K562 (cell line): ENCODE measurements at regions of chr3 and their contacts with region 1.

Region 1: GRCh38 chr3:39126532-39127071 is 19.1 kb downstream of the TTC21A start:
- DNase-seq: peak; percentile 62 to 78 (median 66)
- ATAC-seq: peak; percentile 92
- H3K4me3 ChIP-seq: no peak overlapping the region
- H3K27ac ChIP-seq: no peak overlapping the region
- H3K4me1 ChIP-seq: no peaks in the 10 kb centered on the region; a peak in 1 of 5 replicates
- H3K27me3 ChIP-seq: no peaks in the 10 kb centered on the region
- CTCF ChIP-seq: peak; percentile 85 to 96 (median 89)
- EP300 ChIP-seq: no peak
- POLR2A ChIP-seq: no peak
- RAD21 ChIP-seq: peak; percentile 91 to 98

Region 2: DNA sequence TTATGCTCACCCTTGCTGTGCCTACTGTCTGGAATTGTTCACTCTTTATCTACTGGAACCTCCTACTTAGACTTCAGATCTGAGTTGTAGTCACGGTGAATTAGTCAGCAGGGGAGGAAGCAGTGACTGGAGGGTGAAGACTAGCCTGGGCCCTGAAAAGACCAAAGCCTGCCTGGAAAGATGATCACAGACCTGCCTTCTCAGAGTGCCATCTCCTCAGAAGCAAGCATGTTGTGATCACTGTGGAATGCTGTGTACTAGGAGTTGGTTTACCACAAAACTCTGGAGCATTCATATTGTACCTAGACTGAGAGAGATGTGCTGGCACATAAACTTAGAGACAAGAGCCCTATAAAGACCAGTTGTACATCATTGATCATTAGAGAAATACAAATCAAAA is 209.9 kb before region 1 on chr3:
- CTCF ChIA-PET with region 1: no interaction called
- POLR2A ChIA-PET with region 1: no interaction called
- in situ Hi-C with region 1: no loop called
- intact Hi-C with region 1: no loop called
- DNase-seq: no peak
- ATAC-seq: no peak
- H3K4me3 ChIP-seq: no peak overlapping the region
- H3K27ac ChIP-seq: no peak overlapping the region
- H3K4me1 ChIP-seq: no peaks in the 10 kb centered on the region
- H3K27me3 ChIP-seq: 0 out of 5 replicates have a peak, but pooled peaks cover 0 to 4% of the 10 kb centered on the region in 2 experiments
- CTCF ChIP-seq: no peak
- EP300 ChIP-seq: no peak
- POLR2A ChIP-seq: no peak
- RAD21 ChIP-seq: no peak

Region 3: GRCh38 chr3:39146984-39147591 is 20.5 kb after region 1 on chr3:
- CTCF ChIA-PET with region 1: no interaction called
- POLR2A ChIA-PET with region 1: interaction called, 21 read pairs
- in situ Hi-C with region 1: no loop called
- intact Hi-C with region 1: loop called (anchors 2 kb)
- DNase-seq: peak in 2 of 4 experiments; percentile 56 to 84
- ATAC-seq: peak; percentile 33
- H3K4me3 ChIP-seq: no peak overlapping the region; the same call in 1 of the 2 replicates
- H3K27ac ChIP-seq: peak overlapping the region; percentile 35
- H3K4me1 ChIP-seq: peaks cover 54 to 56% of the 10 kb centered on the region in 2 experiments
- H3K27me3 ChIP-seq: no peaks in the 10 kb centered on the region; a peak in 1 of 5 replicates
- CTCF ChIP-seq: no peak
- EP300 ChIP-seq: no peak
- POLR2A ChIP-seq: no peak; the same call in 1 of the 2 replicates
- RAD21 ChIP-seq: no peak

Region 4: GRCh38 chr3:39158148-39158715 is 31.6 kb after region 1 on chr3:
- CTCF ChIA-PET with region 1: no interaction called
- POLR2A ChIA-PET with region 1: no interaction called
- in situ Hi-C with region 1: no loop called
- intact Hi-C with region 1: no loop called
- DNase-seq: no peak
- ATAC-seq: no peak
- H3K4me3 ChIP-seq: no peak overlapping the region
- H3K27ac ChIP-seq: no peak overlapping the region
- H3K4me1 ChIP-seq: peaks cover 14 to 19% of the 10 kb centered on the region in 2 experiments
- H3K27me3 ChIP-seq: no peaks in the 10 kb centered on the region; a peak in 1 of 5 replicates
- CTCF ChIP-seq: no peak
- EP300 ChIP-seq: no peak
- POLR2A ChIP-seq: no peak
- RAD21 ChIP-seq: no peak

Region 5: DNA sequence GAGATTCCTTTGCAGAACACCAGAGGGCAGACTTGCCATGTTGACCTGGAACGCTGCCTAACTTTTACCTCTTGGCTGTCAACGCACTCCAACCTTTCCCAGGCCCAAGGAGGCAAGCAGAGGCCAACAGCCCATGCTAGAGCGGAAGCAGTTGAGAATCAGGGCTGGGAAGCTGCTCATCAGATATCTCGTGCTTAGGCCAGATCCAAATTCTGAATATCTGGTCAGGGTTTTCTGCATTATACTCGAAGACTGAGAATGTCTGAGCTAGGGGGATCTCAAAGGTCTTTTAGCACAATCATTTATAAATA is 63.3 kb after region 1 on chr3:
- CTCF ChIA-PET with region 1: interaction called, 10 read pairs
- POLR2A ChIA-PET with region 1: interaction called, 4 read pairs
- in situ Hi-C with region 1: loop called (anchors 5 kb)
- intact Hi-C with region 1: no loop called
- DNase-seq: peak; percentile 79 to 86 (median 80)
- ATAC-seq: peak; percentile 85
- H3K4me3 ChIP-seq: no peak overlapping the region
- H3K27ac ChIP-seq: no peak overlapping the region
- H3K4me1 ChIP-seq: peaks cover 0 to 26% of the 10 kb centered on the region in 2 experiments; a peak in 2 of 5 replicates
- H3K27me3 ChIP-seq: peaks cover 11 to 23% of the 10 kb centered on the region in 2 experiments; a peak in 4 of 5 replicates
- CTCF ChIP-seq: peak; percentile 89 to 94 (median 91)
- EP300 ChIP-seq: peak; percentile 43
- POLR2A ChIP-seq: no peak
- RAD21 ChIP-seq: peak; percentile 99 to 100

Region 6: DNA sequence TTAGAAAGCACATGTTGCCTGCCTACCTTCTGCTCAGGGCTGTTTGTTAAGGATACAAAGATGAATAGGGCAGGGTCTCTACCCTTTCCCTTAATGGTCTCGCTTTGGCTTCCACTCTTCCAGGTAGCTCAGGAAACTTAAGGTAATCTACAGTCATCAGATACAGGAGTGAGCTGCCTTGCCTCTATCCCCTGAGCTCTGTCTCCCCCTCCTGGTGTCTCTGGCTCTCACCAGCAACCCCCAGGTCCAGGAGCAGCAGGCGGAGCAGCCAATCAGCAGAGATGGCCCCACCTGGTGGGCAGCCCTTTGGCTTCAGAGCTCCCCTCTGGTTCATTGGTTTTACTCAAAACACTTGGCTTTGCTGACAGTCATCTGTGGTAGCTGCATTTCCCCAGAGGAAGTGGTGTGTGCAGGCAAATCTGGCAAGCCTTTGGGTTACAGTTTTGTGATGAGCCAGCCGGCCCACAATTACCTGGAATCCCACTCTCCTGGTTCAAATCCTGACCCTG is 161.8 kb after region 1 on chr3:
- CTCF ChIA-PET with region 1: interaction called, 42 read pairs
- POLR2A ChIA-PET with region 1: interaction called, 7 read pairs
- in situ Hi-C with region 1: loop called (anchors 5 kb)
- intact Hi-C with region 1: loop called (anchors 1 kb)
- DNase-seq: peak; percentile 90 to 97 (median 94)
- ATAC-seq: peak; percentile 96
- H3K4me3 ChIP-seq: no peak overlapping the region
- H3K27ac ChIP-seq: no peak overlapping the region
- H3K4me1 ChIP-seq: peaks cover 3 to 21% of the 10 kb centered on the region in 2 experiments; a peak in 3 of 5 replicates
- H3K27me3 ChIP-seq: peaks cover 0 to 4% of the 10 kb centered on the region in 2 experiments; a peak in 1 of 5 replicates
- CTCF ChIP-seq: peak; percentile 99 to 100 (median 99)
- EP300 ChIP-seq: peak; percentile 29; the same call in 1 of the 2 replicates
- POLR2A ChIP-seq: no peak
- RAD21 ChIP-seq: peak; percentile 100

Region 7: DNA sequence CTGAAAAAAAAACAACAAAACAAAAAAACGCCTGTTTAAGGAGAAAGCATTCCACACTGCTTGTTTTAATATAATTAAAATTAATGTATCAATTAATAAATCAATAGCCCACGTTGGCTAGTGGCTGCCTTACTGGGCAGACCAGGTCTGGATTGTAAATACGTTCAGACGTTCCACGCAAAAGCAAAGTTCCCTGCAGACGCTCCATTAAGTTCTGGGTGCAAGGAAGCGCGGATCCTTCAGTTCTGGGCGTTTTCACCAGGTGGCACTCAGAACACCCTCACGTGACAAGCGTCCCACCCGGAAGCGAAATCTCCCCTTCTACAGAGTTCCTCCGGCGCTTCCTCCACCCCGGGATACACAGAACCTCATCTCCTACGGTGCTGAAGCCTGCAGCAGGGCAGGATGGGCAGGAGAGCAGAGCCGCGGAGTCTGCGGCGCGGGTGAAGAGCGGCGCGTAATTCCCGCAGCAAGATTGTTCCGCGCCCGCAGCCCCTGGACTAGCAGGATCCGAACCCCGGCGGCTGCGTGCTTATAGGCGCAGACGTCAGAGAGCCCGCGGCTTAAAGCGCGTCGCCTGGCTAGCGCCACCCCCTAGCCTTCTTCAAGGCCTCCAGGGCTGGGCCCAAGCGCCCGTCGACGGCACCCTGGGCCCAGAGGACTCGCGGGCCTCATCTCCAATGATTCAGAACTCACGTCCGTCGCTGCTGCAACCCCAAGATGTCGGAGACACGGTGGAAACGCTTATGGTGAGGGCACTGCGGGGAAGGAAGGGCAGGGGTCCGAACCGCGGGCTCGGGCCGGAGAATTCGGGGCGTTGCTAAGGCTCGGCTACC is 256.7 kb after region 1 on chr3 and contains the start of gene SLC25A38:
- CTCF ChIA-PET with region 1: interaction called, 3 read pairs
- POLR2A ChIA-PET with region 1: no interaction called
- in situ Hi-C with region 1: loop called (anchors 10 kb)
- intact Hi-C with region 1: loop called (anchors 5 kb)
- DNase-seq: peak; percentile 82 to 94 (median 88)
- ATAC-seq: peak; percentile 88
- H3K4me3 ChIP-seq: peak within 1 kb of the TSS; percentile 69
- H3K27ac ChIP-seq: peak within 1 kb of the TSS; percentile 85
- H3K4me1 ChIP-seq: peaks cover 39 to 50% of the 10 kb centered on the region in 2 experiments
- H3K27me3 ChIP-seq: peaks cover 3 to 4% of the 10 kb centered on the region in 2 experiments; a peak in 3 of 5 replicates
- CTCF ChIP-seq: peak; percentile 61 to 64 (median 61)
- EP300 ChIP-seq: peak; percentile 35; the same call in 1 of the 2 replicates
- POLR2A ChIP-seq: peak; percentile 78
- RAD21 ChIP-seq: peak; percentile 43 to 45; a peak in 2 of 4 replicates
- polyA plus RNA-seq, gene SLC25A38: 13.5 to 16.5 TPM

Region 8: DNA sequence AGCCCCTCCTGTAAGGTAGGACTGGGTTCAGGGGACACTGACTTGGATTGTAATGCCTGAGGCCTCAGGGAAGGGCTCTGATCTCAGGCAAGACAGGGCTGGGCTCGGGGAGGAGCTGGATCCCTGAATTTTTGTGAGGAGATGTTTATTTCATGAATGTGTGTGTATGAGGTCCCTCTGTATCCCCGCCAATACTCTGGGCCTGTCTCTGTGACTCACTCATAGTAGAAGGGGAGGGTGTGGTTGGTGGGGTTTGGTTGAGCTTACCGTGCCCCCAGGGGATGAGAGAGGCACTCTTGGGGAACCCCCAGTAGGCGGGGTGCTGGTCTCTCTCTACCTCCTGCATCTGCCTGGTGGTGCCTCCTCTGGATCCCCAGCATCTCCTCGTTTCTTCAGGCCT is 308.0 kb after region 1 on chr3:
- CTCF ChIA-PET with region 1: no interaction called
- POLR2A ChIA-PET with region 1: no interaction called
- in situ Hi-C with region 1: no loop called
- intact Hi-C with region 1: no loop called
- DNase-seq: no peak
- ATAC-seq: no peak; the same call in 2 of the 3 replicates
- H3K4me3 ChIP-seq: no peak overlapping the region
- H3K27ac ChIP-seq: no peak overlapping the region
- H3K4me1 ChIP-seq: no peaks in the 10 kb centered on the region
- H3K27me3 ChIP-seq: peaks cover 15 to 41% of the 10 kb centered on the region in 2 experiments; a peak in 4 of 5 replicates
- CTCF ChIP-seq: no peak
- EP300 ChIP-seq: no peak
- POLR2A ChIP-seq: no peak
- RAD21 ChIP-seq: no peak

Region 9: DNA sequence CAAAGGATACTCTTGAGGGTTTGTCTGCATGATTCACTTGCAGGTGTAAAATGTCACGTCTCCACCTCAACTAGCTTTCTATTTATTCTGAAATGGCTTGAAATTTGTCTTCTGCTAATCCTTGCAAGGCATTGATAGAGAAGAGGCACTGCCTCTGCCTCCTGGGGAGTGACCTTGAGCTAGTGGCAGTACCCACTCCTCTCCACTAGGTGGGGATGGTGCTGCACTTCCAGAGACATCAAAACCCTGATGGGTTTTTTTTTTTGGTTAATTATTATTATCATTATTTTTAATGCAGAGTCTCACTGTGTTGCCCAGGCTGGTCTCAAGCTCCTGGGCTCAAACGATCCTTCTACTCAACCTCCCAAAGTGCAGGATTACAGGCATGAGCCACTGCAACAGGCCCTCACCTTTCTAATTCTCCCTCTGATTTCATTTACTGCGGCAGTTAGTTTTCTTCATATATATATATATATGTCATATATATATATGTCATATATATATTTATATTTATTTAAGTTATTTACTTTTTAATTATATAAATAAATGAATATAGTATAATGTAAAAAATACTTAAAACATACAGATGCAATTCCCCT is 1065.3 kb after region 1 on chr3:
- CTCF ChIA-PET with region 1: no interaction called
- POLR2A ChIA-PET with region 1: no interaction called
- in situ Hi-C with region 1: no loop called
- intact Hi-C with region 1: no loop called
- DNase-seq: peak; percentile 78 to 83 (median 81)
- ATAC-seq: peak; percentile 83
- H3K4me3 ChIP-seq: no peak overlapping the region
- H3K27ac ChIP-seq: no peak overlapping the region
- H3K4me1 ChIP-seq: peaks cover 3 to 9% of the 10 kb centered on the region in 2 experiments; a peak in 2 of 5 replicates
- H3K27me3 ChIP-seq: peaks cover 0 to 34% of the 10 kb centered on the region in 2 experiments; a peak in 2 of 5 replicates
- CTCF ChIP-seq: peak; percentile 87 to 98 (median 91)
- EP300 ChIP-seq: no peak
- POLR2A ChIP-seq: no peak
- RAD21 ChIP-seq: peak; percentile 89 to 93